MCF 10A (cell line): ENCODE measurements at regions of chr1 and their contacts with region 1.

Region 1: DNA sequence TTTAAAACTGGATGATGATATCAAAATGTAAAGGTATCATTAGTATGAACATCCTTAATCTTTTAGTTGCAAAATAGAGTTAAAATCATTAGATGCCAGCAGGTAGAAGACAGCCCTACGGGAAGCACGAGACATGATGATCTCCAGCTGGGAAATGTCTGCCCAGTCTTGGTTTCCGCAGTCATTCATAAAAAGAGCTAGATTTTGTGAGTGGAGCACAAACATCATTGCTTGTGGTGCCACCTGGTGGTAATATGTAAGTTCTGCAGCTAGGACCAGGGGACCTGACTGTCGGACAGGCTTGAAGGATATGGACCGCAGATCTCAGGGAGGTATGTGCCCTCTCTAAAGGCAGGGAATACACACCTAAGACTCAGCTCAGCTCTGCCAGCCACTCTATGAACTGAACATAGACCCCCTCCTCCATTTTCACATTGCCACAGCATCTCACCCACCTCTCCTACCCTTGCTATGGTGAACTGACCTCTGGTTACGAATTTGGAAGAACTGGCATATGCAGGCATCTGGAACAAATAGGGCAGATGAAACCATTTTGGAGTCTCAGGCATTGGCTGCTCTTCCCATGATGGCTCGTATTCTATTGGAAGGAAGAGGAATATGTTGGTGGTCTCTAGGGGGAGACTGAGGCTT is 9.2 kb downstream of the FCMR start:
- DNase-seq: peak; percentile 96
- H3K4me3 Mint-ChIP-seq: no peak overlapping the region
- H3K27ac Mint-ChIP-seq: no peak overlapping the region
- H3K4me1 Mint-ChIP-seq: peaks cover 28% of the 10 kb centered on the region
- H3K27me3 Mint-ChIP-seq: peaks cover 43% of the 10 kb centered on the region
- CTCF ChIP-seq: peak; percentile 94

Region 2: DNA sequence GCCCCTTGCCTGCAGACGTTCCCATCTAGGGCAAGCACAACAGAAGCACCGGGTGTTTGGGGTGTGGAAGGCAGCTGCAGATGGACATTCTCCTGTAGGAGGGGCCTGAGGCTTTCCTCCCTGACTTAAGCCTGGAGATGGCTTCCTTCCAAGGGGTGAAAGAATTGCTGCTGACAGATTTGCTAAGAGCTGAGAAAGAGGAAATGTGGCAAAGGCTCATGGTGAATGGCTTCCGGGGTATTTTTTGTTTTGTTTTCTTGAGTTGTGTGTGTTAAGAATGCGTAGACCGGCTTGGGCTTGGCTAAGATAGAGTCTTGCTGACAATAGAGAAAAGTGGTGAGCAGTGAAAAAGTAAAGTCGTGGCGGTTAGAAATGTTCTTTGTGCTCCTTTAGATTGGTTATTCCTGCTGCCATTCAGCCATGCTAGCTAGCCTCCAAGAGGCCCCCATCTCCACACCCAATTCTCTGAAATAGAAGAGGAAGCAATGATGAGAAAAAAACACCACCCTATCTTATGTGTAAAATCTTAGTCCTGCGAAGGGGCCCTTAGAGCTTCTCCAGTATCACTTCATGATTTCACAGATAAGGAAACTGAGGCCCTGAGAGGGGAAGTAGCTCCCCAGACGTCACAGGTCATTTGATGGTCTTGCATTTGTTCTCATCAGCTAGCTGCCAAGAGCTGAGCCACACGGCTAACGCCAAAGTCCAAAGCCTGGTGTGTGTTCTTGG is 337.2 kb before region 1 on chr1:
- CTCF ChIA-PET with region 1: no interaction called
- POLR2A ChIA-PET with region 1: no interaction called
- intact Hi-C with region 1: no loop called
- DNase-seq: peak; percentile 93
- H3K4me3 Mint-ChIP-seq: no peak overlapping the region
- H3K27ac Mint-ChIP-seq: peak overlapping the region; percentile 6
- H3K4me1 Mint-ChIP-seq: peaks cover 12% of the 10 kb centered on the region
- H3K27me3 Mint-ChIP-seq: no peaks in the 10 kb centered on the region
- CTCF ChIP-seq: no peak

Region 3: DNA sequence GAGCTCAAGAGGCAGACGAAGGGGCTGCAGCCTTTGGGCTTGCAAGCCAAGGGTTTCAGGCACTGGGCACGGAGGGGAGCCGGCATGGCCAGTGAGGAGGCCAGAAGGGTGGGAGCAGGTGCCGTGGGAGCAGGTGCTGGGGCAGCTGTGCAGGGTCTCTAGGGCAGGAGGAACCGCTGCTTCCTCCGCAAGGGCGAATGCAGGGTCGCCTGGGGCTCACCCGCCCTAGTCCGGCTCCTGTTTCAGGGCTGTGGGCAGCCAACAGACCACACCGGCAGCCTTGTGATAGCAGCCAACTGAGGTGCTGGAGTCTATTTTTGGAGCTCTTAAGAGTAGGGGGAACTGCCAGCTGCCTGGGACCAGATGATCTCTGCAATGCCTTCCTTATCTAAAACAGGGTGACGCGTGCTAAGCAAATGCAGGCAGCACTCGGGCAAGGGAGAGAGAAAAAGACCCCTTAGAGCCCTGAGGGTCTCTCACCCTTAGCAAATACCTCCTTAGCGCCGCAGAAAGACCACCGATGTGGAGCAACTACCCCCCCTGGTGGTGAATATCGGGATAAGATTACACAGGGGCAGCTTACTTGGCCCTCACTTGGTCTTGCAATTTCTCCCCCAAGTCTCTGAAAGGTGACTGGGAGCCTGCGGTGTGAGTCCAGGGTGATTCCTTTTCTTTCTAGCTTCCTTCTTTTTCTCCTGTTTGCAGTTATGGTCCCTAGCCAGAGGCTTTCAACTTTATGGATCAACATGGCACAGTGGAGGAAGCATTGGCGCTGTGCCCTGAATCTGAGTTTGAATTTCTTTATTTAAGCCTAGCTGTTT is 248.5 kb before region 1 on chr1:
- CTCF ChIA-PET with region 1: interaction called, 41 read pairs
- POLR2A ChIA-PET with region 1: no interaction called
- intact Hi-C with region 1: no loop called
- DNase-seq: peak; percentile 86
- H3K4me3 Mint-ChIP-seq: no peak overlapping the region
- H3K27ac Mint-ChIP-seq: no peak overlapping the region
- H3K4me1 Mint-ChIP-seq: peaks cover 12% of the 10 kb centered on the region
- H3K27me3 Mint-ChIP-seq: peaks cover 26% of the 10 kb centered on the region
- CTCF ChIP-seq: peak; percentile 99

Region 4: GRCh38 chr1:206761159-206761768 is 151.3 kb before region 1 on chr1:
- CTCF ChIA-PET with region 1: interaction called, 28 read pairs
- POLR2A ChIA-PET with region 1: no interaction called
- intact Hi-C with region 1: no loop called
- DNase-seq: no peak
- H3K4me3 Mint-ChIP-seq: no peak overlapping the region
- H3K27ac Mint-ChIP-seq: no peak overlapping the region
- H3K4me1 Mint-ChIP-seq: no peaks in the 10 kb centered on the region
- H3K27me3 Mint-ChIP-seq: peaks cover 19% of the 10 kb centered on the region
- CTCF ChIP-seq: no peak

Region 5: GRCh38 chr1:206834711-206835110 is 77.9 kb before region 1 on chr1:
- CTCF ChIA-PET with region 1: interaction called, 52 read pairs
- POLR2A ChIA-PET with region 1: interaction called, 13 read pairs
- intact Hi-C with region 1: no loop called
- DNase-seq: peak; percentile 63
- H3K4me3 Mint-ChIP-seq: no peak overlapping the region
- H3K27ac Mint-ChIP-seq: peak overlapping the region; percentile 21
- H3K4me1 Mint-ChIP-seq: peaks cover 31% of the 10 kb centered on the region
- H3K27me3 Mint-ChIP-seq: no peaks in the 10 kb centered on the region
- CTCF ChIP-seq: no peak

Region 6: DNA sequence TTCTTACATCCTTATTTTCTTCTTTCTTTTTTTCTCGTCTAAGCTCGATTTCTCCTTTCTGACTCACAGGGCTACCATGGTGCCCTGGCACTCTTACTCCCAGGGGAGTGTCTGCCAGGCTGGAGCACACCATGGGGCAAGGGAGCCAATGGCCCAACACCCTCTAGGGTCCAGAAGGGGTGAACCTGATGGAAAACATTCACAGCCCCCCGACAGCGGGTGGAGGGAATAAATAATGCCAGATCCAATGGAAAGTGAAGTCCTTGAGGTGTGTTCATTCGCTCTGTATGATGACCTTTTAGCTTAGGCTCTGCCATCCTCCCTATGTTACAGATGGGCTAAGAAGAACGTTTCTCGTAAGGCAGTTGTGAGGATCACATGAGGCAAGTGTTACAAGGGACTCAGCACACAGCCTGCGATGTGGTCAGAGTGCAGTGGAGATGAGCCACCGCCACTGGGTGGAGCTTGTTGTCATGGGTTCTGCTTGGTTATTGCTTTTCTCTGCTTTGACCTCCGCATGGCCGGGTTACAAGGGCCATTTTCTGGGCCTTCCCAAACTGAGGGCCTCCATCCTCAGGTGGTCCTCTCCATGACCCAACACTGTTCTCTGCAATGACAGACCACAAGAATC is 12.7 kb after region 1 on chr1:
- CTCF ChIA-PET with region 1: interaction called, 36 read pairs
- POLR2A ChIA-PET with region 1: interaction called, 3 read pairs
- intact Hi-C with region 1: no loop called
- DNase-seq: no peak
- H3K4me3 Mint-ChIP-seq: no peak overlapping the region
- H3K27ac Mint-ChIP-seq: no peak overlapping the region
- H3K4me1 Mint-ChIP-seq: no peaks in the 10 kb centered on the region
- H3K27me3 Mint-ChIP-seq: no peaks in the 10 kb centered on the region
- CTCF ChIP-seq: no peak

Region 7: GRCh38 chr1:206982216-206982615 is 69.6 kb after region 1 on chr1:
- CTCF ChIA-PET with region 1: interaction called, 287 read pairs
- POLR2A ChIA-PET with region 1: interaction called, 16 read pairs
- intact Hi-C with region 1: loop called (anchors 1 kb)
- DNase-seq: peak; percentile 81
- H3K4me3 Mint-ChIP-seq: no peak overlapping the region
- H3K27ac Mint-ChIP-seq: no peak overlapping the region
- H3K4me1 Mint-ChIP-seq: no peaks in the 10 kb centered on the region
- H3K27me3 Mint-ChIP-seq: no peaks in the 10 kb centered on the region
- CTCF ChIP-seq: peak; percentile 99